ENCODE measurements at regions of chr10 and their contacts with region 1.

Region 1: GRCh38 chr10:110497438-110498086 is at the start of gene DUSP5:
- DNase-seq: peak; percentile 97
- H3K4me3 Mint-ChIP-seq: peak within 1 kb of the TSS; percentile 82
- H3K27ac Mint-ChIP-seq: peak within 1 kb of the TSS; percentile 94
- H3K4me1 Mint-ChIP-seq: peaks cover 60% of the 10 kb centered on the region
- H3K27me3 Mint-ChIP-seq: no peaks in the 10 kb centered on the region
- CTCF ChIP-seq: no peak
- total RNA-seq, gene DUSP5: 61.0 and 106 TPM in 2 replicates

Region 2: GRCh38 chr10:110304780-110305421 is 192.7 kb before region 1 on chr10 and contains the start of gene SMNDC1:
- CTCF ChIA-PET with region 1: interaction called, 33 read pairs
- POLR2A ChIA-PET with region 1: interaction called, 44 read pairs
- intact Hi-C with region 1: loop called (anchors 1 kb)
- DNase-seq: peak; percentile 98
- H3K4me3 Mint-ChIP-seq: peak within 1 kb of the TSS; percentile 94
- H3K27ac Mint-ChIP-seq: peak within 1 kb of the TSS; percentile 95
- H3K4me1 Mint-ChIP-seq: peaks cover 10% of the 10 kb centered on the region
- H3K27me3 Mint-ChIP-seq: no peaks in the 10 kb centered on the region
- CTCF ChIP-seq: no peak
- total RNA-seq, gene SMNDC1: 46.6 and 48.2 TPM in 2 replicates

Region 3: GRCh38 chr10:110336111-110336721 is 161.3 kb before region 1 on chr10:
- CTCF ChIA-PET with region 1: interaction called, 9 read pairs
- POLR2A ChIA-PET with region 1: interaction called, 37 read pairs
- intact Hi-C with region 1: no loop called
- DNase-seq: peak; percentile 96
- H3K4me3 Mint-ChIP-seq: peak overlapping the region; percentile 18
- H3K27ac Mint-ChIP-seq: peak overlapping the region; percentile 59
- H3K4me1 Mint-ChIP-seq: peaks cover 33% of the 10 kb centered on the region
- H3K27me3 Mint-ChIP-seq: no peaks in the 10 kb centered on the region
- CTCF ChIP-seq: no peak

Region 4: DNA sequence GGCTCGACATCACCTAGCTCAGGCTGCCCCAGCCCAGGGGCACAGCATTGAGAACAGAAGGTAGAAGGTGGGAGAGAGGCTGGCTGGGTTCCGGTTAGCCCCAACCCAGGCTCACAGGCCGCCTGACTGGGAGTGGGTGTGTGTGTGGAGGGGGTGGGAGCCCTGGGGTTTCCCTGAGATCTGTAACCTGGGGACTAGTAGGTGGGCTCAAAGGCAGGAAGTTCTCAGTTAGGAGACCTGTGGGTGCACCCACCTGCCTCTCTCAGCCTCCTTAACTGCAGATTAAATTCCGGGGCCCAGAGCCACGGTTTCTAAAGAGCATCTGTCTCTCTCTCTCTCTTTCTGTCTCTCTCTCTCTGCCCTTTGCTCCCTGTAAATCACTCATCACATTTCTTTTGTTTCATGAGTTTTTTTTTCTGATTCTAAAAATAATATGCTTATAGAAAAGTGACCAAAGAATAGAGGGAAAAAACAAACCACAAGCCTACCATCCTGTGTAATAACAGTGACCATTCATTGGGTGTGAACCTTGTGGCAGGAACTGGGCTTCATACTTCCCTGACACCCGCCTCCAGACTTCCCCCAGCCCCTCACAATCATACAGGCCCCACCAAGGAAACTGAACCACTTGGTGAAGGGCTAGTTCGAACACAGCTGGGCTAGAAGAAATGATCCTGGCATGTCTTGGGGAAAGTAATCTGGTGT is 109.4 kb before region 1 on chr10:
- CTCF ChIA-PET with region 1: interaction called, 10 read pairs
- POLR2A ChIA-PET with region 1: no interaction called
- intact Hi-C with region 1: no loop called
- DNase-seq: no peak
- H3K4me3 Mint-ChIP-seq: no peak overlapping the region
- H3K27ac Mint-ChIP-seq: no peak overlapping the region
- H3K4me1 Mint-ChIP-seq: peaks cover 10% of the 10 kb centered on the region
- H3K27me3 Mint-ChIP-seq: no peaks in the 10 kb centered on the region
- CTCF ChIP-seq: no peak

Region 5: GRCh38 chr10:110408203-110408751 is 89.3 kb before region 1 on chr10:
- CTCF ChIA-PET with region 1: interaction called, 5 read pairs
- POLR2A ChIA-PET with region 1: interaction called, 25 read pairs
- intact Hi-C with region 1: loop called (anchors 1 kb)
- DNase-seq: peak; percentile 79
- H3K4me3 Mint-ChIP-seq: no peak overlapping the region
- H3K27ac Mint-ChIP-seq: peak overlapping the region; percentile 89
- H3K4me1 Mint-ChIP-seq: peaks cover 59% of the 10 kb centered on the region
- H3K27me3 Mint-ChIP-seq: no peaks in the 10 kb centered on the region
- CTCF ChIP-seq: no peak

Region 6: GRCh38 chr10:110456523-110457091 is 41.0 kb before region 1 on chr10:
- CTCF ChIA-PET with region 1: no interaction called
- POLR2A ChIA-PET with region 1: interaction called, 10 read pairs
- intact Hi-C with region 1: loop called (anchors 2 kb)
- DNase-seq: peak; percentile 87
- H3K4me3 Mint-ChIP-seq: no peak overlapping the region
- H3K27ac Mint-ChIP-seq: peak overlapping the region; percentile 41
- H3K4me1 Mint-ChIP-seq: peaks cover 33% of the 10 kb centered on the region
- H3K27me3 Mint-ChIP-seq: no peaks in the 10 kb centered on the region
- CTCF ChIP-seq: no peak

Region 7: DNA sequence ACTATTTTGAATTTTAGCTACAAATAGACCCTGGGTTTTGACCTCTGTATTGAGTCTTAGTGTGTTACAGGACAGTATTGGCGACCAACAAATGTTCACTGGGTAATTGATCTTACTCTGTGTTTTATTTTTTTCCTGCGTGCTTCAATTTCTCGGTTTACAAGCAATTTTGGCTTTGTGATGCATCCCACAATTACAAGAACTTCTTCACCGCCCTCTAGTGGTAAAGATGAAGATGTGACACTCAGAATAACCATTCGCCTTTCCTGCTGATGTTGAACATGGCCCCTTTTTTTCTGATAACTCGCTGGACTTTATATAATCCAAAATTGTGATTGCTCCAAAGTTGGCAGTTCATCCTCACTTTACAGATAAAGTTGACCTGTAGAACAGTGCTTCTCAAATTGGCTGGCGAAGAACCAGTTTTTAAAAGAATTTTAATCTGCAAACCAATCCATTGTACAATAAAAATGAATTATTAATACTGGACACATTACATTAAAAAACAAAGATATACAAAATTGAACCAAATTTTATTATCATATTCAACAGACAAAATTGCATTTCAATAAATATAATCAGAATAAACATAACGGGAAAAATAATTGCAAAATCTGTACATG is 49.7 kb after region 1 on chr10:
- CTCF ChIA-PET with region 1: interaction called, 11 read pairs
- POLR2A ChIA-PET with region 1: interaction called, 9 read pairs
- intact Hi-C with region 1: loop called (anchors 1 kb)
- DNase-seq: peak; percentile 68
- H3K4me3 Mint-ChIP-seq: no peak overlapping the region
- H3K27ac Mint-ChIP-seq: no peak overlapping the region
- H3K4me1 Mint-ChIP-seq: peaks cover 4% of the 10 kb centered on the region
- H3K27me3 Mint-ChIP-seq: no peaks in the 10 kb centered on the region
- CTCF ChIP-seq: peak; percentile 64

Region 8: DNA sequence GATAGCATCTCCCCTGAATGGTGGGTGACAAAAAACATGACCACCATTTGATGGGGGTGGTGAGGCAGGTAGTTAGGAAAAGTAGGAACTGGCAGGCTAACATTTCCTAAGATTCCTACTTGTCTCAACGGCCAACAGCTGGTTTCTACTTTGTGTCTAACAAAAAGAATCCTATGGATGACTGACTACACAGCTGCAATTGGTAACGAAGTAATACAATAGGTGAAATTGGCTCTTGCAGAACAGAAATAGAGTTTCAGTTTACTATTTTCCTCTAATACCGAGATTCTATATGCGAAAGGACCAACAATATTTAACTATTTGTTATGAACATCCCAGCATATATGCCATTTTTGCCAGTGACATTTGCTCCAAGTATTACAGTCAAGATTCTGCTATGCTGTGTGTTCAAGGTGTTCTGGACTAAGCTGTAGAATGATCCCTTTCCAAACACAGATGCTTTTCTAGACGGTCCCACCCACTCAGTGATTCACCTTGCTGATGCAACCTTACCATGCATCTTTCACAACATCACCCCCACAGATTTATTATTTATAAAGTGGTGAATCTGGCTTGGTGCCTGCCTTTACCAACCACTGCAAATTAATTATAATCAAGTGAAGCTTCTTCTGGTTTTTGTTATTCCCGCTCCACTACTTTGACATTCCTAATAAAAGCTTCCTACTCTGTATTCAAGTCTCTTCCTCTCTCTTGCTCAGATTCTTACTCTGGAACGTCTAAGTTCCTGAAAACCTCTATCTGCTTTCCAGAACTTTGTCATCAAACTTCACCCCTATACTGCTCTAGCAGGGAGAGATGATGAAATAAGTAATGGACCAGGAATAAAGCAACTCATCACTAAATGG is 404.6 kb after region 1 on chr10:
- CTCF ChIA-PET with region 1: no interaction called
- POLR2A ChIA-PET with region 1: no interaction called
- intact Hi-C with region 1: no loop called
- DNase-seq: peak; percentile 93
- H3K4me3 Mint-ChIP-seq: peak overlapping the region; percentile 2
- H3K27ac Mint-ChIP-seq: peak overlapping the region; percentile 4
- H3K4me1 Mint-ChIP-seq: peaks cover 20% of the 10 kb centered on the region
- H3K27me3 Mint-ChIP-seq: no peaks in the 10 kb centered on the region
- CTCF ChIP-seq: no peak

Measured in MCF 10A (cell line).